MCF 10A (cell line): ENCODE measurements at regions of chr1 and their contacts with region 1.

Region 1: GRCh38 chr1:72186733-72187307 is 95.5 kb downstream of the NEGR1 start:
- DNase-seq: peak; percentile 42
- H3K4me3 Mint-ChIP-seq: no peak overlapping the region
- H3K27ac Mint-ChIP-seq: no peak overlapping the region
- H3K4me1 Mint-ChIP-seq: no peaks in the 10 kb centered on the region
- H3K27me3 Mint-ChIP-seq: no peaks in the 10 kb centered on the region
- CTCF ChIP-seq: peak; percentile 55

Region 2: GRCh38 chr1:71542155-71542554 is 644.7 kb before region 1 on chr1:
- CTCF ChIA-PET with region 1: no interaction called
- POLR2A ChIA-PET with region 1: no interaction called
- intact Hi-C with region 1: no loop called
- DNase-seq: no peak
- H3K4me3 Mint-ChIP-seq: no peak overlapping the region
- H3K27ac Mint-ChIP-seq: no peak overlapping the region
- H3K4me1 Mint-ChIP-seq: no peaks in the 10 kb centered on the region
- H3K27me3 Mint-ChIP-seq: no peaks in the 10 kb centered on the region
- CTCF ChIP-seq: no peak

Region 3: DNA sequence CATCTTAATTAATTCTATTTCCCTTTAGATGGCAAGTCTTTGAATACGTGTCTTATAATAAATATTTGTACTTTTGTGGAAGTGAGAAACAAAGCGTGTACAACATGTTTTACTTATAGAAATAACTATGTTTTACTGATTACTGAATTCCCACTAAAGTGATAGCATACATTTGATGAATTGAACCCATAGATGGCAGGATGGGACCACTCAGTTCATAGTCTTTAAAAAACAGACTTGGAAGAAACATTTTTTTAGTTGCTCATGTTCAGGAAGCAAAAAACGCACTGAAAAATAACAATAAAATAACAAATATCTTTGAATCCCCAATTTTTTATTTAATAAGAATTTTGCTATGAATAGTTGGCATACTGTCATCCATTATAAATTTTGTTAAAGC is 598.9 kb before region 1 on chr1:
- CTCF ChIA-PET with region 1: no interaction called
- POLR2A ChIA-PET with region 1: no interaction called
- intact Hi-C with region 1: loop called (anchors 5 kb)
- DNase-seq: peak; percentile 29
- H3K4me3 Mint-ChIP-seq: no peak overlapping the region
- H3K27ac Mint-ChIP-seq: no peak overlapping the region
- H3K4me1 Mint-ChIP-seq: no peaks in the 10 kb centered on the region
- H3K27me3 Mint-ChIP-seq: no peaks in the 10 kb centered on the region
- CTCF ChIP-seq: peak; percentile 53

Region 4: GRCh38 chr1:72202761-72203160 is 15.9 kb after region 1 on chr1:
- CTCF ChIA-PET with region 1: no interaction called
- POLR2A ChIA-PET with region 1: no interaction called
- intact Hi-C with region 1: no loop called
- DNase-seq: no peak
- H3K4me3 Mint-ChIP-seq: no peak overlapping the region
- H3K27ac Mint-ChIP-seq: no peak overlapping the region
- H3K4me1 Mint-ChIP-seq: no peaks in the 10 kb centered on the region
- H3K27me3 Mint-ChIP-seq: no peaks in the 10 kb centered on the region
- CTCF ChIP-seq: no peak

Region 5: GRCh38 chr1:72623299-72623708 is 436.5 kb after region 1 on chr1:
- CTCF ChIA-PET with region 1: interaction called, 3 read pairs
- POLR2A ChIA-PET with region 1: no interaction called
- intact Hi-C with region 1: loop called (anchors 2 kb)
- DNase-seq: peak; percentile 67
- H3K4me3 Mint-ChIP-seq: peak overlapping the region; percentile 24
- H3K27ac Mint-ChIP-seq: no peak overlapping the region
- H3K4me1 Mint-ChIP-seq: peaks cover 6% of the 10 kb centered on the region
- H3K27me3 Mint-ChIP-seq: peaks cover 21% of the 10 kb centered on the region
- CTCF ChIP-seq: peak; percentile 48

Region 6: GRCh38 chr1:73100216-73100615 is 913.4 kb after region 1 on chr1:
- CTCF ChIA-PET with region 1: no interaction called
- POLR2A ChIA-PET with region 1: no interaction called
- intact Hi-C with region 1: loop called (anchors 1 kb)
- DNase-seq: peak; percentile 7
- H3K4me3 Mint-ChIP-seq: no peak overlapping the region
- H3K27ac Mint-ChIP-seq: no peak overlapping the region
- H3K4me1 Mint-ChIP-seq: no peaks in the 10 kb centered on the region
- H3K27me3 Mint-ChIP-seq: no peaks in the 10 kb centered on the region
- CTCF ChIP-seq: peak; percentile 37

Region 7: GRCh38 chr1:73674945-73675561 is 1488.2 kb after region 1 on chr1:
- CTCF ChIA-PET with region 1: interaction called, 3 read pairs
- POLR2A ChIA-PET with region 1: no interaction called
- intact Hi-C with region 1: loop called (anchors 5 kb)
- DNase-seq: peak; percentile 34
- H3K4me3 Mint-ChIP-seq: no peak overlapping the region
- H3K27ac Mint-ChIP-seq: no peak overlapping the region
- H3K4me1 Mint-ChIP-seq: no peaks in the 10 kb centered on the region
- H3K27me3 Mint-ChIP-seq: no peaks in the 10 kb centered on the region
- CTCF ChIP-seq: peak; percentile 55